Activated T-helper 1 cell treated with anti-CD3 and anti-CD28 coated beads, Interleukin-12 subunit alpha, Interleukin-12 subunit beta, Interleukin-2, Interleukin-4 antibody, amounts not matched to agents 30 ng/mL and 10 ng/mL and 1 ng/mL, durations not matched to agents 14 hours and 24 hours and 36 hours (primary cell): ENCODE measurements at regions of chr10 and their contacts with region 1.

Region 1: DNA sequence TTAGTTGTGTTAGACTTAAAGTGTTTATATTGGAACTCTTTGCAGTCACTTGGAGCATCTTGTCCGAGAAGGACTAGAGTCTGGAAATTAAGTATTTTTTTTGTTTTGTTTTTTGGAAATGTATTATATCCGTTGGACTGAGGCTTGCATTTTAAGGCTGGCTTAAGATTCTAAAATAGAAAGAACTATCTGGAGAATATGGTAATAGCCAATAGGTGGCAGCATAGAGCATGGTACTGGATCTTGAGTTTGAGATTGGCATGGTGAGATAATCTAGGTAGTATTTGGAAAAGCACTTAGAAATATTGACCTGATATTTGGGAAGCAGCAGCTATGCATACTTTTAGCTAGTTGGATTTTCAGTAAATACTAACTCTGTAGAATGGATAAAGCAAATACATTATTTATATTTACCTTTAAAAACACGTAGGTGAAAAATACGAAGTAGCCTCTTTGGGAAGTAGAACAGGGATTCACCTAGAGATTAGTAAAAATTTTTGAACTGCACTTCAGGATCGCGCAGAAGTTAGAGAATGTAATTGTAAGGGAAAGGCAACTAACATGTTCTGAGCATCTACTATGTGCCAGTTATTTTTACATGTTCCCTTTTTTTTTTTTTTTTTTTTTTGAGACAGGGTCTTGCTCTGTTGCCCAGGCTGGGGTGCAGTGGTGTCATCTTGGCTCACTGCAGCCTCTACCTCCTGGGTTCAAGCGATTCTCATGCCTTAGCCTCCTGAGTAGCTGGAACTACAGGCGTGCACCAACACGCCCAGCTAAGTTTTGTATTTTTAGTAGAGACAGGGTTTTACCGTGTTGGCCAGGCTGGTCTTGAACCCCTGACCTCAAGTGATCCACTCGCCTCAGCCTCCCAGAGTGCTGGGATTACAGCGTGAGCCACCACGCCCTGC is 78.6 kb downstream of the LCOR start:
- DNase-seq: no peak
- H3K4me3 Mint-ChIP-seq: no peak overlapping the region
- H3K27ac Mint-ChIP-seq: no peak overlapping the region
- H3K4me1 Mint-ChIP-seq: peaks cover 21% of the 10 kb centered on the region
- H3K27me3 Mint-ChIP-seq: no peaks in the 10 kb centered on the region

Region 2: DNA sequence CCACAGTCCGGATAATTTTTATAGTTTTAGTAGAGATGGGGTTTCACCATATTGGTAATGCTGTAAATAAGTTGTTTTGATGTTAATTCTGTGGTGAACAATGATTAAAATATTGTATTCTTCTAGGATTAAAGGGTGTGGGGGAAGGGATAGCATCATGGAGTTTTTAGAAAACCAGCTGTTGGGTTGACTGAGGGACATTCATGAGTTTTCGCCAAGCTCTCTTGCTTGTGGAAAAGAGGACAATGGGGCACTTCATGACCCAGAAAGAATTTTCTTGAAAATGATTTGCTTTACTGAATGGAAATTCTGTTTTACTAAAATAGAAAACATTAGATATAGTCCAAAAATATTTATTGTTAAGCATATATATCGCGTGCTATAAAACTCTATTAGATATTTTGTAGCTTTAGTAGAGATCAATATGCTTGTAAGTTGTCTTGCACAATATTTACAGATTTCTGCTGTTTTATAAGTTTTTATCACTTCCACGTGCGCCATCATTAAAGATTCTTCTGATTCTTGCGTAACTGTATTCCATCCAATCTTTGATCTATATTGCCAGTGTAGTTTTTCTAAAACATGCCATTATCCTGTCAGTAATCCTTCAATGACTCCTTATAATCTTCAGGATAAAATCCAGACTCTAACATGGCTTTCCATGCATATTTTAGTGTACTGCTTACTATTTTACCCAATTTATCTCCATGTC is 36.8 kb before region 1 on chr10:
- intact Hi-C with region 1: loop called (anchors 1 kb)
- DNase-seq: no peak
- H3K4me3 Mint-ChIP-seq: no peak overlapping the region
- H3K27ac Mint-ChIP-seq: peak overlapping the region; percentile 78
- H3K4me1 Mint-ChIP-seq: peaks cover 18% of the 10 kb centered on the region
- H3K27me3 Mint-ChIP-seq: no peaks in the 10 kb centered on the region

Region 3: GRCh38 chr10:96896884-96897589 is 13.7 kb before region 1 on chr10:
- intact Hi-C with region 1: loop called (anchors 1 kb)
- DNase-seq: no peak
- H3K4me3 Mint-ChIP-seq: no peak overlapping the region
- H3K27ac Mint-ChIP-seq: peak overlapping the region; percentile 40
- H3K4me1 Mint-ChIP-seq: peaks cover 53% of the 10 kb centered on the region
- H3K27me3 Mint-ChIP-seq: no peaks in the 10 kb centered on the region